GM12878 (cell line): ENCODE measurements at regions of chr1 and their contacts with region 1.

Region 1: GRCh38 chr1:9867408-9868243 is 42.4 kb downstream of the CTNNBIP1 start:
- DNase-seq: peak; percentile 36
- ATAC-seq: peak; percentile 90
- H3K4me3 ChIP-seq: no peak overlapping the region
- H3K27ac ChIP-seq: no peak overlapping the region
- H3K4me1 ChIP-seq: peaks cover 22% of the 10 kb centered on the region
- H3K27me3 ChIP-seq: no peaks in the 10 kb centered on the region
- CTCF ChIP-seq: peak; percentile 94 to 98 (median 98); a peak in 5 of 6 replicates
- EP300 ChIP-seq: no peak
- POLR2A ChIP-seq: no peak
- RAD21 ChIP-seq: peak; percentile 97

Region 2: DNA sequence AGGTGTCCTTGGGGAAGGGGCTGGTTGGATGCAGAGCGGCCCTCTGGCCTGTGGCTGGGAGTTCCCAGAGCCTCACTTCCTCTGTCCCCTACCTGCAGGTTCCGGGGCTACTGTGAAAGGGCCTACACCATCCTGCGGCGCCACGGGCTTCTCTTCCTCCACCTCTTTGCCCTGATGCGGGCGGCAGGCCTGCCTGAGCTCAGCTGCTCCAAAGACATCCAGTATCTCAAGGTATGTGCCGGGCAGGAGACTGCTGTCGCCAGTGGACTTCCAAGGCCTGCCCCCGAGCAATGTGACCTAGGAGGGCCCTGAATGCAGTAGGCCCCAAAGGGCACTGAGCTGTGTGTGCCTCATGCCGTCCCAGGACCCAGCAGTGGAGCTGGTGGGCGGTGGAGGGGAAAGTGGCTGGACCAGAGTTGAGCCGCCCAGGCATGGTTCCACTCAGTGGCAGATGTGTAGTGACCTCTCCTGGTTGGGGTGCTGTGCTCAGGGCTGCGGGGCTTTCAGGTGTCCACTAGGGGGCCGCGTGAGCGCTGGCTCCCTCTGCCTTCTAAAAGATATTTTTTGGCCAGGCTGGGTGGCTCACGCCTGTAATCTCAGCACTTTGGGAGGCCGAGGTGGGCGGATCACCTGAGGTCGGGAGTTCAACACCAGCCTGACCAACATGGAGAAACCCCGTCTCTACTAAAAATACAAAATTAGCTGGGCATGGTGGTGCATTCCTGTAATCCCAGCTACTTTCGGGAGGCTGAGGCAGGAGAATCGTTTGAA is 142.7 kb before region 1 on chr1:
- CTCF ChIA-PET with region 1: interaction called, 4 read pairs
- POLR2A ChIA-PET with region 1: interaction called, 3 read pairs
- RAD21 ChIA-PET with region 1: interaction called, 4 read pairs
- SMC1A ChIA-PET with region 1: interaction called, 4 read pairs
- in situ Hi-C with region 1: no loop called
- intact Hi-C with region 1: loop called (anchors 2 kb)
- DNase-seq: no peak
- ATAC-seq: peak; percentile 91
- H3K4me3 ChIP-seq: no peak overlapping the region
- H3K27ac ChIP-seq: no peak overlapping the region
- H3K4me1 ChIP-seq: no peaks in the 10 kb centered on the region
- H3K27me3 ChIP-seq: no peaks in the 10 kb centered on the region
- CTCF ChIP-seq: peak; percentile 92 to 96 (median 95)
- EP300 ChIP-seq: no peak
- POLR2A ChIP-seq: no peak; the same call in 1 of the 2 replicates
- RAD21 ChIP-seq: peak; percentile 61

Region 3: DNA sequence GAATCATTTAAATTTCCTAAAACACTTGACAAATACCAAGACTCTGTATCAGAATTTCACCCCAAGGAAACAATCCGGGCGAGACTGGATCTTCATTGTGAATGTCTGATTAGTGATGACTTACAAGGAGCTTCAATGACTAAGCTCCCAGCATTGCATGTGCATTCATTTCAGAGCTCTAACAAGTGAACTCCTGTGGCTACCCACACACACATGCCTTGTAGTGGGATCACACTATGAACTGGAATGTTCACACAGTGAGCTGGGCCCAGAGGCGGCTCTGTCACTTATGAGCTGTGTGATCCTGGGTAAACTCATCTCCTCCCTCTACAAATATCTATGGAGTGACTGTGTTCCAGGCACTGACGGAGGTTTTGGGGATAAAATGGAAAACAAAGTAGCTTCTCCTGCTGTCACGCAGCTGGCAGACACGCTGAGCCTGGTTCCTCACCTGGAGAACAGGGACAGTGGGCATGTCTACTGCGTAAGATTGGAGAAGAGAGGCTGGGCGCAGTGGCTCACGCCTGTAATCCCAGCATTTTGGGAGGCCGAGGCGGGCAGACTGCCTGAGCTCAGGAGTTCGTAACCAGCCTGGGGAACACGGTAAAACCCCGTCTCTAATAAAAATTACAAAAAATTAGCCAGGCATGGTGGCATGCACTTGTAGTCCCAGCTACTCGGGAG is 100.7 kb before region 1 on chr1:
- CTCF ChIA-PET with region 1: no interaction called
- POLR2A ChIA-PET with region 1: no interaction called
- RAD21 ChIA-PET with region 1: no interaction called
- SMC1A ChIA-PET with region 1: no interaction called
- in situ Hi-C with region 1: no loop called
- intact Hi-C with region 1: no loop called
- DNase-seq: no peak
- ATAC-seq: no peak
- H3K4me3 ChIP-seq: no peak overlapping the region
- H3K27ac ChIP-seq: no peak overlapping the region
- H3K4me1 ChIP-seq: no peaks in the 10 kb centered on the region
- H3K27me3 ChIP-seq: no peaks in the 10 kb centered on the region
- CTCF ChIP-seq: no peak
- EP300 ChIP-seq: no peak
- POLR2A ChIP-seq: no peak
- RAD21 ChIP-seq: no peak

Region 4: GRCh38 chr1:9823943-9824701 is 43.5 kb before region 1 on chr1 and contains the start of gene CLSTN1:
- CTCF ChIA-PET with region 1: interaction called, 5 read pairs
- POLR2A ChIA-PET with region 1: interaction called, 3 read pairs
- RAD21 ChIA-PET with region 1: interaction called, 6 read pairs
- SMC1A ChIA-PET with region 1: interaction called, 6 read pairs
- in situ Hi-C with region 1: no loop called
- intact Hi-C with region 1: loop called (anchors 2 kb)
- DNase-seq: peak; percentile 9
- ATAC-seq: peak; percentile 65
- H3K4me3 ChIP-seq: peak within 1 kb of the TSS; percentile 96
- H3K27ac ChIP-seq: peak within 1 kb of the TSS; percentile 32; the same call in 1 of the 2 replicates
- H3K4me1 ChIP-seq: peaks cover 26% of the 10 kb centered on the region
- H3K27me3 ChIP-seq: no peaks in the 10 kb centered on the region
- CTCF ChIP-seq: no peak
- EP300 ChIP-seq: no peak
- POLR2A ChIP-seq: no peak
- RAD21 ChIP-seq: no peak
- polyA plus RNA-seq, gene CLSTN1: 2.7 to 5.6 TPM

Region 5: DNA sequence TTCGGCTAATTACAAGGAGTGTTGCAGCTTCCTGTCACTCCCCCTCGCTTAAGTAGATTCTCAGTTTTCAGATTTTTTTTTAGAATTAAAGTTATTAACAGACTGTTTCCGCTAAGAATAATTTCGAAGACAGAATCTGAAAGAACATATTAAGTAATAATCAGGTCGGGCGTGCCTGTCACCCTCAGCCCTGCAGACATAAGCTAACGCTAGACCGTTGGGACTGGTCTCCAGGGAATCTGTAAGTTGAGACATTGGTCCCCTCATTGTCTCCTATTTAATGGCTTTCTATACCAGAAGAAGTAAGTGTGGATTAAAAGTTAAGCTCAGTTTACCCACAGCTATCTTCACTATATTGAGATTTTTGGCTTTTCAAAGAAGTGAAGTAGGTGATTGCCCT is 90.1 kb after region 1 on chr1:
- CTCF ChIA-PET with region 1: no interaction called
- POLR2A ChIA-PET with region 1: no interaction called
- RAD21 ChIA-PET with region 1: no interaction called
- SMC1A ChIA-PET with region 1: no interaction called
- in situ Hi-C with region 1: no loop called
- intact Hi-C with region 1: no loop called
- DNase-seq: no peak
- ATAC-seq: no peak
- H3K4me3 ChIP-seq: no peak overlapping the region
- H3K27ac ChIP-seq: no peak overlapping the region
- H3K4me1 ChIP-seq: peaks cover 9% of the 10 kb centered on the region
- H3K27me3 ChIP-seq: no peaks in the 10 kb centered on the region
- CTCF ChIP-seq: no peak
- EP300 ChIP-seq: no peak
- POLR2A ChIP-seq: no peak
- RAD21 ChIP-seq: no peak